B cell (primary cell): ENCODE measurements at regions of chr1 and their contacts with region 1.

Region 1: GRCh38 chr1:160315359-160315758 is 27.7 kb downstream of the COPA start:
- DNase-seq: no peak
- ATAC-seq: no peak
- H3K4me3 ChIP-seq: no peak overlapping the region
- H3K4me3 Mint-ChIP-seq: no peak overlapping the region
- H3K27ac ChIP-seq: no peak overlapping the region
- H3K27ac Mint-ChIP-seq: no peak overlapping the region
- H3K4me1 ChIP-seq: no peaks in the 10 kb centered on the region
- H3K4me1 Mint-ChIP-seq: peaks cover 2% of the 10 kb centered on the region
- H3K27me3 ChIP-seq: no peaks in the 10 kb centered on the region
- H3K27me3 Mint-ChIP-seq: no peaks in the 10 kb centered on the region
- CTCF ChIP-seq: no peak

Region 2: DNA sequence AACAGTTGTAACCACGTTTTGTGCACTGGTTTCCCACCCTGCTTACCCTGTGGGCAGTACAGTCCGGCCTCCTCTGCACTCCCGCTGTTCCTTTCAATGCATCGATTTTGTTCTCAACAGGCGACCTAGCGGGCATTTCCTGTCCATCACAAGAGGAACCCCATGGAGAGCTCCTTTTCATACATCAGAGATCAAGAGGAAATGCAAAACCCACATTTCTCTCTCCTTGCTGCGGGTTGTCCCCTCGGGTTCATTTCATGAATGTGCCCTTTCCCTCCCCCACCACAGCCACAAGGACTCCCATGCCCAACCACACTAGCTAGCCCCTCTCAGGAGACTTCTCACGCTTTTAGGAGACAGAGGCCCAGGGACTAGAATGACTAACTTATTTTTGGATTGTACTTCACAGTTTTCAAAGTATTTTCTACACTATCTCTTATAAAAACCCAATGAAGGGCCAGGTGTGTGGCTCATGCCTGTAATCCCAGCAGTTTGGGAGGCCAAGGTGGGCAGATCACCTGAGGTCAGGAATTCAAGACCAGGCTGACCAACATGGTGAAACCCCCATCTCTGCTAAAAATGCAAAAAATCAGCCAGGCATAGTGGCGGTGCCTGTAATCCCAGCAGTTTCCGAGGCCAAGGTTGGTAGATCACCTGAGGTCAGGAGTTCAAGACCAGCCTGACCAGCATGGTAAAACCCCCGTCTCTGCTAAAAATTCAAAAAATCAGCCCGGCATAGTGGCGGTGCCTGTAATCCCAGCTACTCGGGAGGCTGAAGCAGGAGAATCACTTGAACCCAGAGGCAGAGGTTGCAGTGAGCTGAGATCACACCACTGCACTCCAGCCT is 145.6 kb before region 1 on chr1:
- CTCF ChIA-PET with region 1: no interaction called
- POLR2A ChIA-PET with region 1: interaction called, 10 read pairs
- intact Hi-C with region 1: no loop called
- DNase-seq: peak; percentile 17
- ATAC-seq: peak; percentile 31
- H3K4me3 ChIP-seq: peak overlapping the region in 1 of 5 experiments; percentile 15
- H3K4me3 Mint-ChIP-seq: peak overlapping the region; percentile 68
- H3K27ac ChIP-seq: no peak overlapping the region
- H3K27ac Mint-ChIP-seq: peak overlapping the region; percentile 43
- H3K4me1 ChIP-seq: peaks cover 9 to 14% of the 10 kb centered on the region in 2 donors
- H3K4me1 Mint-ChIP-seq: peaks cover 15% of the 10 kb centered on the region
- H3K27me3 ChIP-seq: no peaks in the 10 kb centered on the region
- H3K27me3 Mint-ChIP-seq: peaks cover 9% of the 10 kb centered on the region
- CTCF ChIP-seq: no peak

Region 3: GRCh38 chr1:160277330-160277729 is 38.0 kb before region 1 on chr1:
- CTCF ChIA-PET with region 1: no interaction called
- POLR2A ChIA-PET with region 1: no interaction called
- intact Hi-C with region 1: no loop called
- DNase-seq: no peak
- ATAC-seq: no peak
- H3K4me3 ChIP-seq: no peak overlapping the region
- H3K4me3 Mint-ChIP-seq: no peak overlapping the region
- H3K27ac ChIP-seq: no peak overlapping the region
- H3K27ac Mint-ChIP-seq: no peak overlapping the region
- H3K4me1 ChIP-seq: no peaks in the 10 kb centered on the region
- H3K4me1 Mint-ChIP-seq: no peaks in the 10 kb centered on the region
- H3K27me3 ChIP-seq: no peaks in the 10 kb centered on the region
- H3K27me3 Mint-ChIP-seq: no peaks in the 10 kb centered on the region
- CTCF ChIP-seq: no peak